B cell (primary cell): ENCODE measurements at regions of chr5 and their contacts with region 1.

Region 1: DNA sequence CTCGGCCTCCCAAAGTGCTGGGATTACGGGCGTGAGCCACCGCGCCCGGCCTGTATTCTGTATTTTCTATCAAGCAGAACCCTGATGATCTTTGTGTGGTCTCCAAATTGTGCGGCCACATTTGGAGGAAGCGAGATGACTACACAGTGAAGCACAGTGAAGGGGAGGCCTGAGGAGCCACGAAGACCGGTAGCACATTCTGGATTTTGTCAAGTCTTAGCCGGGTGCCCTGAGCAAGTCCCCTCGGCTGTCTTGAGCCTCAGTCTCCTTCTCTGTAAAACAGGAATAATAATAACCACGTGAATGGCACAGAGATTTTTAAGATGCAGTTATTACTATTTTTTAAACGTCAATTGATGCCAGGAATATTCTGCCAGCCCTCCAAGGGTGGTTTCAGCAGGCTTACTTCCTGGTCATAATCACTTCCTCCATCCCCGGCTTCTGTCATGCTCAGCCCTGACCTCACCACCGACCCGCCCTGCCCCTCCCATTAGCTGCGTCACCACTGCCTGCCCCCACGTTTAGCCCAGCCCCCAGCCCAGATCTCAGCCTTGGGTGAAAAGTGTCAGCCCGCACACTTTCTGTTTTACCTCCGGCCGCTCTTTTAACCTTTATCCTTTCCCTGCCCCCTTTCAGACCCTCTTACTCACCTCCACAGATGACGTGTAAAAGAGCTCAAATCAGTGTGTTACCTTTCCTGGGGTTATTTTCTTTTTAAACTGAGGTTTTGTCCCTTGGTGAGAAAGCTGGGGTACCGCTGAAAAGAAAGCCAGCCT is 27.0 kb upstream of the ERGIC1 start:
- DNase-seq: peak; percentile 95
- ATAC-seq: peak; percentile 100
- H3K4me3 ChIP-seq: peak overlapping the region; percentile 57 to 70 (median 62)
- H3K4me3 Mint-ChIP-seq: peak overlapping the region; percentile 84
- H3K27ac ChIP-seq: peak overlapping the region; percentile 94 to 95
- H3K27ac Mint-ChIP-seq: peak overlapping the region; percentile 92
- H3K4me1 ChIP-seq: peaks cover 8 to 12% of the 10 kb centered on the region in 2 donors
- H3K4me1 Mint-ChIP-seq: peaks cover 13% of the 10 kb centered on the region
- H3K27me3 ChIP-seq: no peaks in the 10 kb centered on the region
- H3K27me3 Mint-ChIP-seq: no peaks in the 10 kb centered on the region
- CTCF ChIP-seq: no peak

Region 2: DNA sequence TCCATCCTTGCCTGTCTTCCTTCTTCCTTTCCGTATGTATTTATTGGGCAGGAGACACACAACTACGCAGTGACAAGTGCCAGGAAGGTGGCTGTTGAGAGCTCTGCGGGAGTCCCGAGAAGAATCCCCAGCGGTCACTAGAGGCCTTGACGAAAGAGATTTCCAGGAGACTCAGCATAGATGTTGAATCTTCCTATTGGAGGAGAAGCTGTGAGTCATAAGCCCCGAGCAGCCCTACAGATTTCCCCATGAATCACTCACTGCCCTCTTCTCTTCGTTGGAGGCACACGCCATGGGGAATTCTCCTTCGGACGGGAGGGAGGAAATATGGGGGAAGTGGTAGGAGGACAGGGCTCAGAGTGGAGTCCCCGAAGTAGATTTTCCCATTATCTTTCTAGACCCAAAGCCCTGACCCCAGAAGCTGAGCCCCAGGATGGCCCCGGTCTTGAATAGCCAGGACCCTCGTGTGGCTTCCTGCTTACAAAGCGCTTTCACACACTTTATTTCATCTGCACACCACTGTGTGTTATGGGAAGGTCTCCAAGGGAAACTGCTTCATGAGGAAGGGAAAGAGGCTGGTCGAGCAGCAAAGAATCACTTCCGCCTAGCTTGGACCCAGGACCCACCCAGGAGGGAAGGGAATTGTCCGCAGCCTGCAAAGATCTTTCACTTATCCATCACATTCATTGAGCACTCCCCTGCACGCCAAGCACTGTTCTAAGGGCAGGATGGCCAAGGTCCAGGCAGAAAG is 48.8 kb before region 1 on chr5:
- CTCF ChIA-PET with region 1: no interaction called
- POLR2A ChIA-PET with region 1: no interaction called
- intact Hi-C with region 1: no loop called
- DNase-seq: no peak
- ATAC-seq: no peak
- H3K4me3 ChIP-seq: no peak overlapping the region
- H3K4me3 Mint-ChIP-seq: no peak overlapping the region
- H3K27ac ChIP-seq: no peak overlapping the region
- H3K27ac Mint-ChIP-seq: no peak overlapping the region
- H3K4me1 ChIP-seq: no peaks in the 10 kb centered on the region
- H3K4me1 Mint-ChIP-seq: no peaks in the 10 kb centered on the region
- H3K27me3 ChIP-seq: no peaks in the 10 kb centered on the region
- H3K27me3 Mint-ChIP-seq: peaks cover 13% of the 10 kb centered on the region
- CTCF ChIP-seq: no peak

Region 3: GRCh38 chr5:172777881-172778814 is 28.9 kb before region 1 on chr5:
- CTCF ChIA-PET with region 1: interaction called, 4 read pairs
- POLR2A ChIA-PET with region 1: interaction called, 4 read pairs
- intact Hi-C with region 1: loop called (anchors 1 kb)
- DNase-seq: no peak
- ATAC-seq: peak; percentile 7
- H3K4me3 ChIP-seq: peak overlapping the region in 2 of 5 experiments; percentile 18 to 44
- H3K4me3 Mint-ChIP-seq: peak overlapping the region; percentile 61
- H3K27ac ChIP-seq: peak overlapping the region; percentile 84 to 96
- H3K27ac Mint-ChIP-seq: peak overlapping the region; percentile 90
- H3K4me1 ChIP-seq: peaks cover 29 to 31% of the 10 kb centered on the region in 2 donors
- H3K4me1 Mint-ChIP-seq: peaks cover 44% of the 10 kb centered on the region
- H3K27me3 ChIP-seq: no peaks in the 10 kb centered on the region
- H3K27me3 Mint-ChIP-seq: no peaks in the 10 kb centered on the region
- CTCF ChIP-seq: no peak

Region 4: DNA sequence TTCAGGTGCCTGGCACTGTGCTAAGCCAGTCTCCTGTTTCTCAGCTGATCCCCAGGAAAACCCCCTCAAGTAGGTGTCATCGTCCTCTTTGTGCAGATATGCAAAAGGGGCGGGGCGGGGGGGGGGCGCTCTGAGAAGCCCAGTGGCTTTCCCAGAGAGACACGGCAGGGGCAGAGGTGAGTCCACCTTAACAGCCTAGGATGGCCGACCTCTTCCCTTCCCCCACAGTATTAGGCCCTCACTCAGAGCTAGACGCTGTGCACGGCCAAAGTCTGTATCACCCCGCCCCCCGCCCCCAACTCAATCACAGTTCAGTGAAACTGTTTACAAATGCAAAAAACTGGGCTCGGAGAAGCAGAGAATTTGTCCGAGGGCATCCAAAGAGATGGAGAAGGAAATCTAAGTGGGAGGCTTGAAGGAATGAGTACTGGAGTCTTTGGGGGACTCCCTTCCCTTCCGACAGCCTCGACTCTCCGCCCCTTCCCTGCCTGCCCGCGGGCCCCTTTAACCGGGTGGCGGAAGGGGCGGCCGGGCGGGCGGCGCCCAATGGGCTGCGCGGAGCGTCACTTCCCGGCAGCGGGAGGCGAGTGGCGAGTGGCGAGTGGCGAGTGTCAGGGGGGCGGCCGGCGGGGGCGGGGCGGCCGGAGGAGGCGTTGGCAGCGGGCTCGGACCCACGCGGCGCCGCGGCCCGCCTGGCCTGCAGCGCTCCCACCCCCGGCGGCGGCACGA is 26.8 kb after region 1 on chr5 and contains the start of gene ERGIC1:
- CTCF ChIA-PET with region 1: interaction called, 6 read pairs
- POLR2A ChIA-PET with region 1: interaction called, 11 read pairs
- intact Hi-C with region 1: loop called (anchors 1 kb)
- DNase-seq: peak; percentile 86
- ATAC-seq: peak; percentile 74
- H3K4me3 ChIP-seq: peak within 1 kb of the TSS; percentile 62 to 90 (median 69)
- H3K4me3 Mint-ChIP-seq: peak within 1 kb of the TSS; percentile 90
- H3K27ac ChIP-seq: peak within 1 kb of the TSS; percentile 95 to 98
- H3K27ac Mint-ChIP-seq: peak within 1 kb of the TSS; percentile 96
- H3K4me1 ChIP-seq: peaks cover 42 to 52% of the 10 kb centered on the region in 2 donors
- H3K4me1 Mint-ChIP-seq: peaks cover 48% of the 10 kb centered on the region
- H3K27me3 ChIP-seq: no peaks in the 10 kb centered on the region
- H3K27me3 Mint-ChIP-seq: no peaks in the 10 kb centered on the region
- CTCF ChIP-seq: no peak
- total RNA-seq, gene ERGIC1: 132 and 140 TPM in 2 replicates

Region 5: GRCh38 chr5:172849606-172850453 is 42.7 kb after region 1 on chr5:
- CTCF ChIA-PET with region 1: no interaction called
- POLR2A ChIA-PET with region 1: interaction called, 17 read pairs
- intact Hi-C with region 1: loop called (anchors 1 kb)
- DNase-seq: peak; percentile 93
- ATAC-seq: peak; percentile 84
- H3K4me3 ChIP-seq: peak overlapping the region in 4 of 5 experiments; percentile 11 to 40 (median 20)
- H3K4me3 Mint-ChIP-seq: peak overlapping the region; percentile 73
- H3K27ac ChIP-seq: peak overlapping the region; percentile 88 to 95
- H3K27ac Mint-ChIP-seq: peak overlapping the region; percentile 95
- H3K4me1 ChIP-seq: peaks cover 61 to 74% of the 10 kb centered on the region in 2 donors
- H3K4me1 Mint-ChIP-seq: peaks cover 80% of the 10 kb centered on the region
- H3K27me3 ChIP-seq: no peaks in the 10 kb centered on the region
- H3K27me3 Mint-ChIP-seq: no peaks in the 10 kb centered on the region
- CTCF ChIP-seq: no peak

Region 6: GRCh38 chr5:172958331-172959046 is 151.4 kb after region 1 on chr5:
- CTCF ChIA-PET with region 1: no interaction called
- POLR2A ChIA-PET with region 1: no interaction called
- intact Hi-C with region 1: loop called (anchors 1 kb)
- DNase-seq: peak; percentile 82
- ATAC-seq: peak; percentile 73
- H3K4me3 ChIP-seq: peak overlapping the region; percentile 44 to 97 (median 85)
- H3K4me3 Mint-ChIP-seq: peak overlapping the region; percentile 97
- H3K27ac ChIP-seq: peak overlapping the region; percentile 54 to 81
- H3K27ac Mint-ChIP-seq: peak overlapping the region; percentile 96
- H3K4me1 ChIP-seq: peaks cover 8 to 18% of the 10 kb centered on the region in 2 donors
- H3K4me1 Mint-ChIP-seq: peaks cover 23% of the 10 kb centered on the region
- H3K27me3 ChIP-seq: no peaks in the 10 kb centered on the region
- H3K27me3 Mint-ChIP-seq: no peaks in the 10 kb centered on the region
- CTCF ChIP-seq: no peak

Region 7: DNA sequence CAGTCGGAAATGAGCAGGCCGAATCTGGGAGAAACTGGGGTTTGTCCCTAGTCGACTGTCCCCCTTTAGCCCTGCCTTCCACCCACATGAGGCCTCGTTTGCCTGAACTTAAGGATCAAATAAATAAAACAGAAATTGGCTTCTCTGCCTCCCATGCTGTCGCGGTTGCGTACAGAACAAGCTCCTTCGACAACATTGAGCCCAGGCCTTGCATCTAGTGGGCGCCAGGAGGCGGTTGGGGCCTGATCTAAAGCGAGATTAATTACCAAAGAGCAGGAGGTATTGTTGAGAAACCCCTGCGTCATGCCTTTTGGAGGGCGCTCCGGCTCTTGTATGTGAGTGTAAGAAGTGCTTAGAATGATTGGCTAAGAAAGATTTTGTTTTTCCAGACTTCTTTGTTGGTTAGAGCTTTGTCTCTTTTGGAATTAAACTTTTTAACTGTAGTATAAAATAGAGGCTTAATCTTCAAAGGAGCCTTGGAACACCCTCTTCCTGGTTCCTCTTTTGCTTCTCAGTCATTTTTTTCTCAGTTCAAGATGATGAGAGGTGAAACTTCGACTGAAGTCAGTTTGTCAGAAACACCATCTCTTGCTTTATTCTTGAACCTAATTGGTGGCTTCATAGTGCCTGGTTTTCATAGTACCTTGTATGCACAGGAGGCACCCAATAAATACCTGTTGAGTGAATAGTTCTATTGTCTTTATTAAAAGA is 177.3 kb after region 1 on chr5:
- CTCF ChIA-PET with region 1: no interaction called
- POLR2A ChIA-PET with region 1: no interaction called
- intact Hi-C with region 1: loop called (anchors 1 kb)
- DNase-seq: peak; percentile 82
- ATAC-seq: peak; percentile 56
- H3K4me3 ChIP-seq: peak overlapping the region; percentile 96 to 99 (median 96)
- H3K4me3 Mint-ChIP-seq: peak overlapping the region; percentile 98
- H3K27ac ChIP-seq: peak overlapping the region; percentile 93 to 97
- H3K27ac Mint-ChIP-seq: peak overlapping the region; percentile 99
- H3K4me1 ChIP-seq: peaks cover 15 to 23% of the 10 kb centered on the region in 2 donors
- H3K4me1 Mint-ChIP-seq: peaks cover 45% of the 10 kb centered on the region
- H3K27me3 ChIP-seq: no peaks in the 10 kb centered on the region
- H3K27me3 Mint-ChIP-seq: no peaks in the 10 kb centered on the region
- CTCF ChIP-seq: peak; percentile 70

Region 8: DNA sequence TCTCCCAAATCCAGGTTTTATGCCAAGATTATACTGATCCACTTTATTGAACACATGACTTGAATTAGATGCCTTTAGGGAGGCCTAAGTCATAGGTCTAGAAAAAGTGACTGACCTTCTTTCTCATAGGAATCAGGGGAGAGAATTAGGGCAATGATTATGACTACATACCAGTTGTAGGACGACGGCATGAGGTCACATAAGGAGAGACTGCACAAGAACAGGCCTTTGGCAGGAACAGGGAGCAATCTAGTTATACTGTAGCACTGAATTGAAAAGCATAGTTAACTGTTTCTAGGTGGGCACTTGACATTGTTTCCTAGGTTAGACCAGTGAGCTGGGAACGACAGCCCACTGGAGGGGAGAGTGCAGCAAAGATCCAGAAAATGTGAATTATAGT is 271.8 kb after region 1 on chr5:
- CTCF ChIA-PET with region 1: no interaction called
- POLR2A ChIA-PET with region 1: no interaction called
- intact Hi-C with region 1: no loop called
- DNase-seq: no peak
- ATAC-seq: no peak
- H3K4me3 ChIP-seq: no peak overlapping the region
- H3K4me3 Mint-ChIP-seq: no peak overlapping the region
- H3K27ac ChIP-seq: no peak overlapping the region
- H3K27ac Mint-ChIP-seq: no peak overlapping the region
- H3K4me1 ChIP-seq: no peaks in the 10 kb centered on the region
- H3K4me1 Mint-ChIP-seq: peaks cover 24% of the 10 kb centered on the region
- H3K27me3 ChIP-seq: no peaks in the 10 kb centered on the region
- H3K27me3 Mint-ChIP-seq: no peaks in the 10 kb centered on the region
- CTCF ChIP-seq: no peak